Activated CD4-positive, alpha-beta memory T cell treated with anti-CD3 and anti-CD28 coated beads for 36 hours (primary cell): ENCODE measurements at regions of chr15 and their contacts with region 1.

Region 1: DNA sequence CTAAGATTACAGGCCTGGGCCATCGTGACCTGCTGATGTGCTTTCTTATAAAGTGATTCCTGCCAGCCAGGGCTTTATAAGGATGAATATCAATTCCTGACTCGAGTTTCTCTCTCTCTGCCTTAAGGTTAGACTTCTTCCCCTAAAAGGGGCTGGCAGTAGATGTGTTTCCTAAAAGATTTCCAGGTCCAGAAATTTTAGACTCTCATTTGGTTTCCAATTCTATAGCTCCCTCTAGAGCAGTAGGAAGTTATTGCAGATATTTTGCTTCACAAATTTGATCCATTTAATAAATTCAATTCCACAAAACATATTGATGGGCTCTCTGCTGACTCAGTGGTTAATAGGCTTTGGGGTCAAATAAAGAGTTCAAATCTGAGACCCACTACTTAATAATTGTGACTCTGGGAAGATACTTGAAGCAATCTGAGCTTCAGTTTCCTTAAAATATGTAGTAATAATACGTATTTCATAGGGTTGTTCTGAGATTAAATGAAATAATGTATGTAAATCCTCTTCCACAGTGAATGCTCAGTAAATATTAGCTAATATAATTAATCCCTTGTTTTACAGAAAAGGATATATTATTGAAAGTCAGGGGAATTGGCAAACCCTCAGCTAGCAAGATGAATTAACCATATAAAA is 2.1 kb downstream of the TRIM69 start:
- DNase-seq: no peak
- H3K4me3 Mint-ChIP-seq: peak overlapping the region; percentile 64
- H3K27ac Mint-ChIP-seq: peak overlapping the region; percentile 72
- H3K4me1 Mint-ChIP-seq: peaks cover 46% of the 10 kb centered on the region
- H3K27me3 Mint-ChIP-seq: no peaks in the 10 kb centered on the region

Region 2: DNA sequence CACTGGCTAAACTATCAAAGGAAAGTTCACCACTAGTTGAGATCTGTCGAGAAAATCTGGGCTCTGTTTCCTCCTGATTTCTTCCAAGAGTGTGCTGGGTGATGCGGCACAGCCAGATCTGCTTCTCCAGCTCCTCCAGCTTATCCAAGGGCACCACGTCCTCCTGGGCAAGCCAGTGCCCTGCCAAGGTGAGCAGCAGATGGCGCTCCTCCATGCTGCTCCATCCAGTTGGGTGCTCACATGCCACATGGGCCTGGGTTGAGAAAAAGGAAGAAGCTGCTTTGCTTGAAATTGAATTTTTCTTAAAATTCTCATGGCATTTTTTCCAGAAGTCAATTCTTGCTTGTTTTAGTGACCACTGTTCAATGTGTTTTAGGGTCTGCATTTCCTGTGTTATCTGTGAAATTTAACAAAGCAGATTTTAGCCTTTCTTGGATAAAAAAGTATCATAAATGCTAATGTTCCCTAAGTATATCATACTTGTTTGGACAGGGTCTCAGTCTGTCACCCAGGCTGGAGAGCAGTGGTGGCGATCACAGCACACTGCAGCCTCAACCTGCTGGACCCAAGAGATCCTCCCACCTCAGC is 154.2 kb before region 1 on chr15:
- CTCF ChIA-PET with region 1: interaction called, 91 read pairs
- POLR2A ChIA-PET with region 1: interaction called, 6 read pairs
- intact Hi-C with region 1: loop called (anchors 2 kb)
- DNase-seq: peak; percentile 76
- H3K4me3 Mint-ChIP-seq: no peak overlapping the region
- H3K27ac Mint-ChIP-seq: no peak overlapping the region
- H3K4me1 Mint-ChIP-seq: no peaks in the 10 kb centered on the region
- H3K27me3 Mint-ChIP-seq: no peaks in the 10 kb centered on the region

Region 3: GRCh38 chr15:44633603-44634002 is 104.9 kb before region 1 on chr15:
- CTCF ChIA-PET with region 1: interaction called, 10 read pairs
- POLR2A ChIA-PET with region 1: no interaction called
- intact Hi-C with region 1: no loop called
- DNase-seq: peak; percentile 18
- H3K4me3 Mint-ChIP-seq: peak overlapping the region; percentile 70
- H3K27ac Mint-ChIP-seq: peak overlapping the region; percentile 96
- H3K4me1 Mint-ChIP-seq: peaks cover 23% of the 10 kb centered on the region
- H3K27me3 Mint-ChIP-seq: no peaks in the 10 kb centered on the region

Region 4: GRCh38 chr15:44676676-44677075 is 61.8 kb before region 1 on chr15:
- CTCF ChIA-PET with region 1: interaction called, 12 read pairs
- POLR2A ChIA-PET with region 1: interaction called, 25 read pairs
- intact Hi-C with region 1: no loop called
- DNase-seq: peak; percentile 77
- H3K4me3 Mint-ChIP-seq: peak overlapping the region; percentile 74
- H3K27ac Mint-ChIP-seq: peak overlapping the region; percentile 95
- H3K4me1 Mint-ChIP-seq: peaks cover 83% of the 10 kb centered on the region
- H3K27me3 Mint-ChIP-seq: no peaks in the 10 kb centered on the region

Region 5: DNA sequence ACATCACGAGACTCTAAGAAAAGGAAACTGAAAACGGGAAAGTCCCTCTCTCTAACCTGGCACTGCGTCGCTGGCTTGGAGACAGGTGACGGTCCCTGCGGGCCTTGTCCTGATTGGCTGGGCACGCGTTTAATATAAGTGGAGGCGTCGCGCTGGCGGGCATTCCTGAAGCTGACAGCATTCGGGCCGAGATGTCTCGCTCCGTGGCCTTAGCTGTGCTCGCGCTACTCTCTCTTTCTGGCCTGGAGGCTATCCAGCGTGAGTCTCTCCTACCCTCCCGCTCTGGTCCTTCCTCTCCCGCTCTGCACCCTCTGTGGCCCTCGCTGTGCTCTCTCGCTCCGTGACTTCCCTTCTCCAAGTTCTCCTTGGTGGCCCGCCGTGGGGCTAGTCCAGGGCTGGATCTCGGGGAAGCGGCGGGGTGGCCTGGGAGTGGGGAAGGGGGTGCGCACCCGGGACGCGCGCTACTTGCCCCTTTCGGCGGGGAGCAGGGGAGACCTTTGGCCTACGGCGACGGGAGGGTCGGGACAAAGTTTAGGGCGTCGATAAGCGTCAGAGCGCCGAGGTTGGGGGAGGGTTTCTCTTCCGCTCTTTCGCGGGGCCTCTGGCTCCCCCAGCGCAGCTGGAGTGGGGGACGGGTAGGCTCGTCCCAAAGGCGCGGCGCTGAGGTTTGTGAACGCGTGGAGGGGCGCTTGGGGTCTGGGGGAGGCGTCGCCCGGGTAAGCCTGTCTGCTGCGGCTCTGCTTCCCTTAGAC is 26.9 kb before region 1 on chr15 and contains the start of gene B2M:
- CTCF ChIA-PET with region 1: interaction called, 164 read pairs
- POLR2A ChIA-PET with region 1: interaction called, 1,161 read pairs
- intact Hi-C with region 1: loop called (anchors 2 kb)
- DNase-seq: peak; percentile 96
- H3K4me3 Mint-ChIP-seq: peak within 1 kb of the TSS; percentile 88
- H3K27ac Mint-ChIP-seq: peak within 1 kb of the TSS; percentile 100
- H3K4me1 Mint-ChIP-seq: peaks cover 42% of the 10 kb centered on the region
- H3K27me3 Mint-ChIP-seq: peaks cover 5% of the 10 kb centered on the region
- total RNA-seq, gene B2M: 6,098 to 6,314 TPM

Region 6: DNA sequence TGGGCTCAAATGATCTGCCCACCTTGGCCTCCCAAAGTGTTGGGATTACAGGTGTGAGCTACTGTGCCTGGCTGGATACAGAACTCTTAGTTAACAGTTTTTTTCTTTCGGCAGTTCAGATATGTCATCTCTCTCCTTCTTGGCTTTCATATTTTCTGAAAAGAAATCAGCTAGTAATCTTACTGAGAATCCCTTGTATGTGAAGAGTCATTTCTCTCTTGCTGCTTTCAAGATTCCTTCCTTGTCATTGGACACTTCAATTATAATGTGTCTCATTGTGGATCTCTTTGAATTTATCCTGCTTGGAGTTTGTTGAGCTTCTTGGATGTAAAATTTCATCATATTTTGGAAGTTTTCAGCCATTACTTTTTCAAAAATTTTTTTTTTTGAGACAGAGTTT is 14.9 kb after region 1 on chr15:
- CTCF ChIA-PET with region 1: interaction called, 13 read pairs
- POLR2A ChIA-PET with region 1: interaction called, 7 read pairs
- intact Hi-C with region 1: no loop called
- DNase-seq: no peak
- H3K4me3 Mint-ChIP-seq: no peak overlapping the region
- H3K27ac Mint-ChIP-seq: no peak overlapping the region
- H3K4me1 Mint-ChIP-seq: peaks cover 34% of the 10 kb centered on the region
- H3K27me3 Mint-ChIP-seq: no peaks in the 10 kb centered on the region

Region 7: DNA sequence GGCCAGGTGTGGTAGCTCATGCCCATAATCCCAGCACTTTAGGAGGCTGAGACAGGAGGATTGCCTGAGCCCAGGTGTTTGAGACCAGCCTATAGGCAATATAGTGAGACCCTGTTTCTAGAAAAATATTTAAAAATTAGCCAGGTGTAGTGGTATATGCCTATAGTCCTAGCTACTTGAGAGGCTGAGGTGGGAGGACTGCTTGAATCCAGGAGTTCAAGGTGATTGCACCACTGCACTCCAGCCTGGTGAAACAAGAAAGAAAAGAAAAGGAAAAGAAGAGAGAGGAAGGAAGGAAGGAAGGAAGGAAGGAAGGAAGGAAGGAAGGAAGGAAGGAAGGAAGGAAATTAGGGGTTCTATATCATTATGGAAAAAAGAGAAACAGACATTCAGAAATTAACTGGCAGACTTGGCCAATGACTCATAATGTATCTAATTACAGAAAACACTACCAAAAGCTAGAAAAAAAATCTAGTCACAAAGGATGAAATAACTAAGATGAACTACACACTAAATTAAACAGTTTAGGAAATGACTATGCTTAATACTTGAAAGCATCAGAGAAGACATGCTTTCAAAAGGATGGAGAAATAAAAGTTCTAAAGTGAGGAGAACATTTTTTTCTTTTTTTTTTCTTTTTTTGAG is 172.6 kb after region 1 on chr15:
- CTCF ChIA-PET with region 1: no interaction called
- POLR2A ChIA-PET with region 1: no interaction called
- intact Hi-C with region 1: no loop called
- DNase-seq: no peak
- H3K4me3 Mint-ChIP-seq: no peak overlapping the region
- H3K27ac Mint-ChIP-seq: peak overlapping the region; percentile 51
- H3K4me1 Mint-ChIP-seq: peaks cover 8% of the 10 kb centered on the region
- H3K27me3 Mint-ChIP-seq: no peaks in the 10 kb centered on the region

Region 8: GRCh38 chr15:45307230-45307924 is 568.9 kb after region 1 on chr15:
- CTCF ChIA-PET with region 1: no interaction called
- POLR2A ChIA-PET with region 1: no interaction called
- intact Hi-C with region 1: no loop called
- DNase-seq: no peak
- H3K4me3 Mint-ChIP-seq: no peak overlapping the region
- H3K27ac Mint-ChIP-seq: no peak overlapping the region
- H3K4me1 Mint-ChIP-seq: peaks cover 4% of the 10 kb centered on the region
- H3K27me3 Mint-ChIP-seq: peaks cover 16% of the 10 kb centered on the region